ENCODE measurements at regions of chr3 and their contacts with region 1.

Region 1: DNA sequence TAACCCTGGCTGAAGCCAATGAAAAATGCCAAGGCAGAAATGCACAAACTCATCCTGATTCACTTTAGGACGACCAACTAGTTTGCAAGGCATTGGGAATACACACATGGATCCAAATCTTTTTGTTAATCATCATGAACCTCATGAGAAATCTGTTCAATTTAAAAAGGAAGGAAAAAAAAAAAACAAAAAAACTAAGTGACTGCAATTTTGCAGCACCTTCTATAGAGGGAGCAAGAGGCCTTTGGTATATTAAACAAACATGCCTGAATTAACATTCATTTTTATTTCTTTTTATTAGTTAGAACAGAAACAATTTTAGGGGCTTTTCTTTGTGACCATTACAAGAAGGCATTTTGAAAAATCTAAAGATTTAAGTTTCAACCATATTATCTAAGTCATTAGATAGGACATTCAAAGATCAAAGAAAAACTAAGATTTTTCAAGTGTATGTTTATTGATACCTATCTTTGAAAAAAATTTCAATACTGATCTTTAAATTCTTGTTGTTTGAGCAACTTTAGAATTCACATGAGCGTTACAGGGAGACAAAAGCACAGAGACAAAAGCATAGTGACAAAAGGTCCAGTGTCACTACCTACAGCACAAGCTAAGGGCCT is 182.4 kb downstream of the CBLB start:
- DNase-seq: peak in 2 of 35 experiments; percentile 3 to 59
- ATAC-seq: peak in 3 of 4 experiments; percentile 19 to 48 (median 45)
- H3K4me3 ChIP-seq: no peak overlapping the region
- H3K4me3 Mint-ChIP-seq: no peak overlapping the region
- H3K27ac ChIP-seq: peak overlapping the region; percentile 25
- H3K27ac Mint-ChIP-seq: peak overlapping the region in 1 of 2 donors; percentile 83
- H3K4me1 ChIP-seq: peaks cover 0 to 4% of the 10 kb centered on the region in 2 experiments
- H3K4me1 Mint-ChIP-seq: peaks cover 26 to 32% (median 27%) of the 10 kb centered on the region in 3 donors
- H3K27me3 ChIP-seq: no peaks in the 10 kb centered on the region
- H3K27me3 Mint-ChIP-seq: no peaks in the 10 kb centered on the region

Region 2: GRCh38 chr3:106609666-106610301 is 923.4 kb after region 1 on chr3:
- CTCF ChIA-PET with region 1: interaction called, 11 read pairs
- POLR2A ChIA-PET with region 1: no interaction called
- DNase-seq: peak; percentile 6 to 84 (median 44)
- ATAC-seq: peak in 3 of 4 experiments; percentile 59 to 69 (median 63)
- H3K4me3 ChIP-seq: no peak overlapping the region
- H3K4me3 Mint-ChIP-seq: no peak overlapping the region
- H3K27ac ChIP-seq: no peak overlapping the region
- H3K27ac Mint-ChIP-seq: no peak overlapping the region
- H3K4me1 ChIP-seq: no peaks in the 10 kb centered on the region
- H3K4me1 Mint-ChIP-seq: peaks cover 0 to 4% (median 4%) of the 10 kb centered on the region in 3 donors
- H3K27me3 ChIP-seq: no peaks in the 10 kb centered on the region
- H3K27me3 Mint-ChIP-seq: no peaks in the 10 kb centered on the region